Posterior vena cava (tissue), 2 donors: ENCODE measurements at regions of chr7 and their contacts with region 1.

Region 1: GRCh38 chr7:28408960-28409715 is 3.2 kb upstream of the CREB5 start:
- DNase-seq: peak; percentile 97

Region 2: GRCh38 chr7:27095897-27096767 is 1313.0 kb before region 1 on chr7 and contains the start of gene HOXA1:
- intact Hi-C with region 1: no loop called
- DNase-seq: peak; percentile 96
- total RNA-seq, gene HOXA1: 0.71 to 0.97 TPM

Region 3: DNA sequence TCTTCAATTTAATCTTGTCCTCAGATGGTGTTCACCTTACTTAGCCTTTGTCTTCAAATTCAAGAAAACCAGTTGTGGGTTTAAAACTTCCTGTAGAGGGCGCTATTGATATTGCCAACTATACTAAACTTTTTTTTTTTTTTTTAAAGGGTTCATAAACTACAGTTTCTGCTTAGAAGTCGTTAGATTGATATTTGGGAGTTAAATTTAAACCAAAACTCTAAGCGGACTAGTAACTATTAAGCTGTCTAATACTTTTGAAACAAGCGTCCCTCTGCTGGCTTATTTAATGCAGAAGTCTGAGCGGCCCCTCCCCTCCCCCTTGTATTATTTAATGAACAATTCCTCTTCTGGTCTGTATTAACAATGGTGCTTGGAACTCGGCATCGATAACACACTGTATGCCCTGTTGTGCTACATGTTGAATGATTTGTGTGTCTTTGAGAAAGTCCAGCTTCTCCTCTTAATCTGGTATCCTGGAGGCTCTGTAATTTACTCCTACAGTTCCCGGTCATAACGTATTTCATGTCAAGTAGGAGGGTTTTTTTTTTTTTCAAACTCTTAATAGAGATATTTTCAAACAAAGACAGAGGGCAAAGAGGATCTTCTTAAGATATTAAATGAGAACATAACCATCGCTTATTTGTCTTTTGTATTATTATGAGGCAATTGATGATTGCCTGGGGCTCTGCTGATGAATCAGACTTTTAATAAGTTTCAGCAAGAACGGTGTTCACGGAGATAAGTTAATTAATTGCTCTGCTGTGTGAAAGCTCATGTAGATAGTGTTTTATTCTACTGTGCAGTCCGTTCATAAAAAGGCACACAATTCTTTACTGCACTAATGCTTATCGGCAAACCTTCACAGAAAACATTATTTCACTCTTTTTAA is 19.4 kb before region 1 on chr7:
- intact Hi-C with region 1: no loop called
- DNase-seq: no peak

Region 4: GRCh38 chr7:28685644-28686417 is 276.7 kb after region 1 on chr7:
- intact Hi-C with region 1: loop called in 1 of 2 experiments (anchors 10 kb)
- DNase-seq: peak; percentile 96